Activated T-helper 2 cell treated with anti-CD3 and anti-CD28 coated beads, Interferon-gamma antibody, Interleukin-2, Interleukin-4, amounts not matched to agents 10 μg/mL and 5 μg/mL and 100 μg/mL, durations not matched to agents 14 hours and 24 hours and 36 hours (primary cell): ENCODE measurements at regions of chr5 and their contacts with region 1.

Region 1: DNA sequence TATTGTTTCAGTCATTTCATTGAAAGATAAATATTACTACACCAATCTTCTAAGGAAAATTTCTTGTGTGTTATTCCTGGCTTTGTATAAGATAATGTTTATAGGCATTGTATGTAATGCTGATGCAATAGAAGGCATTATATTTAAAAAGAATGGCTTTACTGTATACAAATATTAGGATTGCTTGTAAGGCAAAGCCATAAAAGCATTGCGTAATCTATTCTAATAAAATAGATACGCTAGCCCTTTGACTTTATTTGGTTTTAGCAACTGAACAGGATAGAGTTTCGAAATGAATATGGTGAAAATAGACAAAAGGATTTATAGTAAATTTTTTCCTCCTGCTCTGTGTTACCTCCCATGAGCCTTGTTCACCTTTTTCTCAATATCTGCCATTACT is 5.5 kb upstream of the LYSMD3 start:
- DNase-seq: no peak
- H3K4me3 Mint-ChIP-seq: no peak overlapping the region
- H3K27ac Mint-ChIP-seq: no peak overlapping the region
- H3K4me1 Mint-ChIP-seq: no peaks in the 10 kb centered on the region
- H3K27me3 Mint-ChIP-seq: peaks cover 31% of the 10 kb centered on the region

Region 2: DNA sequence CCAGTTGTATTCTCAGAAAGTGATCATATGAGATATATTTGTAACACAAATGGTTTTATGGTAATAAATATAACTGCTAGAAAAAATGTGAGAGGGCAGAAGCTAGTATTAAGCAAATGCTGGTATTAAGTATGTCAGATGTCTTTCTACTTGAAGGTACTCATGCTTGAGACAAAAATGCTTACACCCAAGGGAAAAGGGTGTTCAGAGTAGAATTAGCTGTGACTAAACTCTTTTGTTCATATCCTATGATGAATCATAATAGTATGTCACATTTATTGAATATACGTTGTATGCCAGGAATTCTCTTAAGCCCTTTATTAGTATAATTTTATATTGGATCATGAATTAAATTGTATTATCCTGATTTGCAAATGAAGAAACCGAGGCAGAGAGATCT is 25.8 kb after region 1 on chr5:
- intact Hi-C with region 1: loop called (anchors 1 kb)
- DNase-seq: no peak
- H3K4me3 Mint-ChIP-seq: no peak overlapping the region
- H3K27ac Mint-ChIP-seq: no peak overlapping the region
- H3K4me1 Mint-ChIP-seq: peaks cover 1% of the 10 kb centered on the region
- H3K27me3 Mint-ChIP-seq: peaks cover 58% of the 10 kb centered on the region